B cell (primary cell): ENCODE measurements at regions of chr2 and their contacts with region 1.

Region 1: DNA sequence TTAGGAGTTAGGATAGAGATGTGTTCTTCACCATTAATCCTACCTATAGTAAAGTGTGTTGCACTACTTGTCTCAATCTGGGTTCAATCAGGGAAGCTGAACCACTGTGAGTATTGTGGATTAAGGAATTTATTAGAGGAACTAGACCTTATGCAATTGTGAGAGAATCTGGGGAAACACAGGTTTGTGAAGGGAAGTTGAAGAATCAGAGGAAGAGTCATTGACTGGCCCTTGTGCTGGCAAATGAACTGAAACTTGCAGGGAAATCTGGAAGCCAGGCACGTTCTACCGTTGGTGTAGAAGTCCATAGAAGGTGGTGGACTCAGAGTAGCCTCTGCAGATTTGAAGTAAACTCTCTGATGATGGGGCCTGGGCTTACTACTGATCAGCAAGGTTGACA is 44.7 kb upstream of the HK2 start:
- DNase-seq: no peak
- ATAC-seq: no peak
- H3K4me3 ChIP-seq: no peak overlapping the region
- H3K4me3 Mint-ChIP-seq: no peak overlapping the region
- H3K27ac ChIP-seq: no peak overlapping the region
- H3K27ac Mint-ChIP-seq: no peak overlapping the region
- H3K4me1 ChIP-seq: no peaks in the 10 kb centered on the region
- H3K4me1 Mint-ChIP-seq: no peaks in the 10 kb centered on the region
- H3K27me3 ChIP-seq: peaks cover 0 to 4% (median 1%) of the 10 kb centered on the region in 4 experiments
- H3K27me3 Mint-ChIP-seq: peaks cover 31% of the 10 kb centered on the region
- CTCF ChIP-seq: no peak

Region 2: GRCh38 chr2:74735544-74735943 is 53.7 kb before region 1 on chr2:
- CTCF ChIA-PET with region 1: no interaction called
- POLR2A ChIA-PET with region 1: interaction called, 10 read pairs
- intact Hi-C with region 1: no loop called
- DNase-seq: no peak
- ATAC-seq: no peak
- H3K4me3 ChIP-seq: no peak overlapping the region
- H3K4me3 Mint-ChIP-seq: no peak overlapping the region
- H3K27ac ChIP-seq: no peak overlapping the region
- H3K27ac Mint-ChIP-seq: no peak overlapping the region
- H3K4me1 ChIP-seq: no peaks in the 10 kb centered on the region
- H3K4me1 Mint-ChIP-seq: no peaks in the 10 kb centered on the region
- H3K27me3 ChIP-seq: peaks cover 0 to 9% (median 2%) of the 10 kb centered on the region in 4 experiments
- H3K27me3 Mint-ChIP-seq: peaks cover 41% of the 10 kb centered on the region
- CTCF ChIP-seq: no peak

Region 3: DNA sequence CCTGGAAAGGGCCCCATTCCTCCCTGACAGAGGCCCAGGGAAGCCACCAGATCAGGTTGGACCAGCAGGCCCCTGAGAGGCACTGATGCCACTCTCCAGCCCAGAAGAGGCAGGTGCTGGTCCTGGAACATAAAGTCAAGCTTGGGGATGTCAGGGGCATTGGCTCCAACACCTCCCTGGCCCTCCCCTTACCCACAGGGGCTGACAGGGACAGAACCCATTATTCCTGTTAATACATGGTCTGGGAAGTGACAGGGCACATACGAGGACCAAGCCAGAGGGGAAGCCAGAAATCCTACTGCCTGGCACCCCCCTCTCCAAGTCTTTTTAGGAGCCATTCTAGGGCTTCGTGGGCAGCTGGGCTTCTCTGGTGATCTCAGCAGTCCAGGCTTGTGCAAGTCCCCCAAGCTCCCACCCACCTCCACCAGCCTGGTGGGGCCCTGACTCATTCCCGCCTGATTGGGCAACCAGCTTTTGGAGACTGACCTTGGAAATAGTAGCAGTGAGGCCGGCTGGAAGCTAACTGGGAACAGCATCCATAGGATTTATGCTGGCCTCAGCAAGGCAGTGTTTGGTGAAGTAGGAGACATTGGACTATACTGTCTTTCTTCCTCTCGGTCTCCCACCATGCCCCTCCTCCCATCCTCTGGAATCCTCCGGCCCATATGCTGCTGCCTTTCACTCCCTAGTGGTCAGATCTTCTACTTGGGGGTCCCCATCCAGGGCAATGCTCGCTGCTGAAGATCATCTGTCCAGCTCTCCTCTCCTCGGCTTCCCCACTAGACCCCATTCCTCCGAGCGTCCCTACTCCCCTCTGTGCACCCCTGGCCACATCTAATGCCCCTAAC is 41.7 kb before region 1 on chr2:
- CTCF ChIA-PET with region 1: no interaction called
- POLR2A ChIA-PET with region 1: no interaction called
- intact Hi-C with region 1: no loop called
- DNase-seq: no peak
- ATAC-seq: no peak
- H3K4me3 ChIP-seq: no peak overlapping the region
- H3K4me3 Mint-ChIP-seq: no peak overlapping the region
- H3K27ac ChIP-seq: no peak overlapping the region
- H3K27ac Mint-ChIP-seq: no peak overlapping the region
- H3K4me1 ChIP-seq: no peaks in the 10 kb centered on the region
- H3K4me1 Mint-ChIP-seq: no peaks in the 10 kb centered on the region
- H3K27me3 ChIP-seq: peaks cover 0 to 4% (median 2%) of the 10 kb centered on the region in 4 experiments
- H3K27me3 Mint-ChIP-seq: peaks cover 14% of the 10 kb centered on the region
- CTCF ChIP-seq: no peak